Activated T-helper 2 cell treated with anti-CD3 and anti-CD28 coated beads, Interferon-gamma antibody, Interleukin-2, Interleukin-4, amounts not matched to agents 10 μg/mL and 5 μg/mL and 100 μg/mL, durations not matched to agents 14 hours and 24 hours and 36 hours (primary cell): ENCODE measurements at regions of chr13 and their contacts with region 1.

Region 1: DNA sequence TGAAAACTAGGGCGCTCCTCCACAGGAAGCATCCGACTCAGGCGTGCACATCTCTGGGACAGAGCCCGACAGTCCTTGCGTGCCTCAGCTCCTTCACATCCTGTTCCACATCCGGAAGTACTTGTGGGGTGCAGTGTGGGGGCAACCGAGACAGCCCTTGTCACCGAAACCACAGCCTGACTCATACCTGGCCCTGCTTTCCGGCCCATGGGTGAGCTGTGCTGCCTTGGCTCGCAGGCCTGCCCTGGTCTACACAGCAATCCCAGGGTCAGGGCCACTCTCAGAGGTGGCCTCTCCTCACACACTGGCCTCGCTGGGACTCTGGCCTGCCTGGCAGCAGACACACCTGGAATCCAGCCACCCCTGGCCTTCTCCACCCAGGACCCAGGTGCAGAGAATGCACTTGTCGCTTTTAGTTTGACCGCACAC is 100.4 kb downstream of the STK24 start:
- DNase-seq: peak; percentile 87
- H3K4me3 Mint-ChIP-seq: peak overlapping the region; percentile 72
- H3K27ac Mint-ChIP-seq: peak overlapping the region; percentile 92
- H3K4me1 Mint-ChIP-seq: peaks cover 63% of the 10 kb centered on the region
- H3K27me3 Mint-ChIP-seq: no peaks in the 10 kb centered on the region

Region 2: GRCh38 chr13:98509271-98510155 is 33.0 kb after region 1 on chr13:
- intact Hi-C with region 1: loop called (anchors 1 kb)
- DNase-seq: peak; percentile 43
- H3K4me3 Mint-ChIP-seq: peak overlapping the region; percentile 49
- H3K27ac Mint-ChIP-seq: peak overlapping the region; percentile 83
- H3K4me1 Mint-ChIP-seq: peaks cover 70% of the 10 kb centered on the region
- H3K27me3 Mint-ChIP-seq: no peaks in the 10 kb centered on the region

Region 3: GRCh38 chr13:98528663-98529570 is 52.4 kb after region 1 on chr13:
- intact Hi-C with region 1: loop called (anchors 1 kb)
- DNase-seq: no peak
- H3K4me3 Mint-ChIP-seq: no peak overlapping the region
- H3K27ac Mint-ChIP-seq: peak overlapping the region; percentile 83
- H3K4me1 Mint-ChIP-seq: peaks cover 70% of the 10 kb centered on the region
- H3K27me3 Mint-ChIP-seq: no peaks in the 10 kb centered on the region

Region 4: DNA sequence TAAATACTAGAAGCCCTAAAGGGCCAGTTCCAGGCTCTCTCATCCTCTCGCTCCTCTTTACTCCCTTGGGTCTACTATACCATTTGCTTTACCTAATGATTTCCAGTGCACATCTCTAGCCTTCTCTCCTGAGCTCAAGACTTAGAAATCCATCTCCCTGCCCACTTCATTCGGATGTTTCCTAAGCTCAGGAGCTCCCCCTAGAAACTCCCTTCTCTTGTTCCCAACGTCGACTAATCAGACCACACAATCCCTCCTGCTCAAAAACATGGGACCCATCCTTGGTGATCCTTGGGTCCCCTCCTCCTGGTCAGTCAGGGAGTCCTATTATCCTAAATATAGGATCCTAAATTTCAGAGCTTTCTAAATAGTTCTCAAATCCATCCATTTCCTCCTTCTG is 121.5 kb after region 1 on chr13:
- intact Hi-C with region 1: loop called (anchors 1 kb)
- DNase-seq: no peak
- H3K4me3 Mint-ChIP-seq: no peak overlapping the region
- H3K27ac Mint-ChIP-seq: no peak overlapping the region
- H3K4me1 Mint-ChIP-seq: peaks cover 18% of the 10 kb centered on the region
- H3K27me3 Mint-ChIP-seq: peaks cover 2% of the 10 kb centered on the region

Region 5: GRCh38 chr13:98664039-98664438 is 187.5 kb after region 1 on chr13:
- intact Hi-C with region 1: loop called (anchors 1 kb)
- DNase-seq: peak; percentile 18
- H3K4me3 Mint-ChIP-seq: no peak overlapping the region
- H3K27ac Mint-ChIP-seq: peak overlapping the region; percentile 58
- H3K4me1 Mint-ChIP-seq: peaks cover 18% of the 10 kb centered on the region
- H3K27me3 Mint-ChIP-seq: peaks cover 27% of the 10 kb centered on the region